ENCODE measurements at regions of chr14 and their contacts with region 1.

Region 1: GRCh38 chr14:37116933-37117849 is 55.2 kb downstream of the SLC25A21 start:
- DNase-seq: no peak
- H3K4me3 Mint-ChIP-seq: no peak overlapping the region
- H3K27ac Mint-ChIP-seq: no peak overlapping the region
- H3K4me1 Mint-ChIP-seq: peaks cover 8% of the 10 kb centered on the region
- H3K27me3 Mint-ChIP-seq: no peaks in the 10 kb centered on the region
- CTCF ChIP-seq: peak; percentile 20

Region 2: GRCh38 chr14:36751139-36751538 is 366.1 kb before region 1 on chr14:
- CTCF ChIA-PET with region 1: no interaction called
- intact Hi-C with region 1: loop called (anchors 10 kb)
- DNase-seq: peak; percentile 52
- H3K4me3 Mint-ChIP-seq: no peak overlapping the region
- H3K27ac Mint-ChIP-seq: no peak overlapping the region
- H3K4me1 Mint-ChIP-seq: peaks cover 17% of the 10 kb centered on the region
- H3K27me3 Mint-ChIP-seq: no peaks in the 10 kb centered on the region
- CTCF ChIP-seq: no peak

Region 3: GRCh38 chr14:36866867-36867266 is 250.3 kb before region 1 on chr14:
- CTCF ChIA-PET with region 1: no interaction called
- intact Hi-C with region 1: no loop called
- DNase-seq: no peak
- H3K4me3 Mint-ChIP-seq: no peak overlapping the region
- H3K27ac Mint-ChIP-seq: no peak overlapping the region
- H3K4me1 Mint-ChIP-seq: peaks cover 16% of the 10 kb centered on the region
- H3K27me3 Mint-ChIP-seq: no peaks in the 10 kb centered on the region
- CTCF ChIP-seq: no peak

Region 4: DNA sequence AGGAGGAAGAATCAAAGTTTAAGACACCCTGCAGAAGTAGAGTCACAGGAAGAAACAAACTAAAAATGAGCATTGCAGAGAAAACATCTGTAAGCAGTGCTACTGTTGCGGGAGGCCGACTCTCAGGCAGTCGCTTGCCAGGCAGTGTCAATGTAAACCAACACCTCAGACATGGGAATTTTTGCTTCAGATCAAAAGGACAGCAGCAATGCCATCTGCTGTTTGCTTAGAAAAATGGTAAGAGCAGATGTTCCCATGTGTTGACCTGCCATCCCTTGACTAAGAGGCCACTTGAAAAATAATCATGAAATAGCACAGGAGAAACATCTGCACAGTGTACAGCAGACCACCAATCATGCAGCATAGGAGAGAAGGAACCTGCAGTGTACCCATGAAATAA is 141.4 kb before region 1 on chr14:
- CTCF ChIA-PET with region 1: interaction called, 5 read pairs
- intact Hi-C with region 1: loop called (anchors 10 kb)
- DNase-seq: no peak
- H3K4me3 Mint-ChIP-seq: no peak overlapping the region
- H3K27ac Mint-ChIP-seq: peak overlapping the region; percentile 82
- H3K4me1 Mint-ChIP-seq: peaks cover 66% of the 10 kb centered on the region
- H3K27me3 Mint-ChIP-seq: no peaks in the 10 kb centered on the region
- CTCF ChIP-seq: no peak

Region 5: GRCh38 chr14:37088356-37089215 is 28.6 kb before region 1 on chr14:
- CTCF ChIA-PET with region 1: interaction called, 3 read pairs
- intact Hi-C with region 1: loop called (anchors 2 kb)
- DNase-seq: no peak
- H3K4me3 Mint-ChIP-seq: no peak overlapping the region
- H3K27ac Mint-ChIP-seq: no peak overlapping the region
- H3K4me1 Mint-ChIP-seq: peaks cover 30% of the 10 kb centered on the region
- H3K27me3 Mint-ChIP-seq: no peaks in the 10 kb centered on the region
- CTCF ChIP-seq: no peak